ENCODE measurements at regions of chr2 and their contacts with region 1.

Region 1: DNA sequence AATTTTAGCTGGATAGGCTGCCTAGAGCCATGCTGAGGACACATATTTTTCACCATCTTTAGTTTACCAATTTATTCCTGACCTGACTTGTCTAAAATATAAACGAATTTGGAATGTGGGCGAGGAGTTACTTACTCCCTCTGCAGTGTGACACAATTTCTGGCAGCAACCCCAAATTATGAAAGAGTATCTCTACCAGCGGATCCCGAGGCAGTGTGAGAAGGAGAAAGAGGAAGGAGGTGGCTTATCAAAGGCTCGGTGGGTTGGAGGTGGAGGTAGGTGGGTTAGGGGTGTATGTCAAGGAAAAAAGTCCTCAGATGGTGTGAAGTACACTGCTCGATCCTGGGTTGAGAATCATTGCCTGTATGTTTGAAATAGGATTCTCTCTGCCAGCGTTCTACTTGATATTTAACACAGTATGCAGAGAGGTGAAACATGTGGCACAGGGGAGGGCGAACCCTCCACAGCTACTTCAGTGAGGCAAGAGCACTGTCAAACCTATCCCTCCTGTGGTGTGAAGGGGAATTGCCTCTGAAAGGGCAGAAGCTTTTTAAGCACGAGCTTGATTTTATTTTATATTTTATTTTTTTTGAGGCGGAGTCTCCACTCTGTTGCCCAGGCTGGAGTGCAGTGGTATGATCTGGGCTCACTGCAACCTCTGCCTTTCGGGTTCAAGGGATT is 76.0 kb downstream of the RFTN2 start:
- DNase-seq: peak; percentile 87
- H3K4me3 Mint-ChIP-seq: peak overlapping the region; percentile 58
- H3K27ac Mint-ChIP-seq: peak overlapping the region; percentile 75
- H3K4me1 Mint-ChIP-seq: peaks cover 6% of the 10 kb centered on the region
- H3K27me3 Mint-ChIP-seq: no peaks in the 10 kb centered on the region
- CTCF ChIP-seq: peak; percentile 25

Region 2: GRCh38 chr2:197576631-197577030 is 22.8 kb before region 1 on chr2:
- CTCF ChIA-PET with region 1: interaction called, 13 read pairs
- POLR2A ChIA-PET with region 1: interaction called, 23 read pairs
- intact Hi-C with region 1: no loop called
- DNase-seq: peak; percentile 93
- H3K4me3 Mint-ChIP-seq: no peak overlapping the region
- H3K27ac Mint-ChIP-seq: peak overlapping the region; percentile 6
- H3K4me1 Mint-ChIP-seq: peaks cover 12% of the 10 kb centered on the region
- H3K27me3 Mint-ChIP-seq: no peaks in the 10 kb centered on the region
- CTCF ChIP-seq: no peak

Region 3: DNA sequence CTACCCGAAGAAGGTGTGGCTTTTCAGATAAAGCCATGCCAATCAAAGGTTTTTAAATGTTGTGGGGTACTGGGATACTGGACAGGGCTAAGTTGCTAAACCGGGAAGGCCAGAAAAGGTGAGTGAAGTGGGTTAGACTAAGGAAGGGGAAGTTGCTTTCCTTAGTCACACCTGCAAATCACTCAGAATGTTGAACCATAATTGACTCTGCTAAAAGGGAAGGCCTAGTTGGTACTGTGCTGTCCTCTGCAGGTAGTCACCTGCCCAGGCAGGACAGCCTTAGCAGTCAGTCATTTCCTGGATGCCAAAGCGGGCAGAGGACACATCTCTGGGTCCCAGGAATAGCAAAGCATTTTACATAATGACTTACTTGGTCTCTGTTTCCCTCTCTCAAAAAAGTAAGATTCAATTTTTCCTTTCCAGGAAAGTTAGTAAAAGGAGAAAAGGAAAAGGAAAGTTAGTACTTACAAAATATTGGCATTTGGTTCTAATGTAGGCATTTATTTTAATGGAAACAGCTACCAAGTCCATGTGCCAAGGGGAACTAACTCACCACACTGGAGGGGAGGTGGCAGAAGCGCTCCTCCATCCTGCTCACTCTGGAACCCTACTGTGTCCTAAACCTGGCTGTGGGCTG is 15.7 kb after region 1 on chr2:
- CTCF ChIA-PET with region 1: interaction called, 7 read pairs
- POLR2A ChIA-PET with region 1: interaction called, 19 read pairs
- intact Hi-C with region 1: no loop called
- DNase-seq: peak; percentile 60
- H3K4me3 Mint-ChIP-seq: no peak overlapping the region
- H3K27ac Mint-ChIP-seq: peak overlapping the region; percentile 9
- H3K4me1 Mint-ChIP-seq: peaks cover 22% of the 10 kb centered on the region
- H3K27me3 Mint-ChIP-seq: no peaks in the 10 kb centered on the region
- CTCF ChIP-seq: peak; percentile 7

Region 4: GRCh38 chr2:197626965-197627625 is 27.7 kb after region 1 on chr2:
- CTCF ChIA-PET with region 1: no interaction called
- POLR2A ChIA-PET with region 1: no interaction called
- intact Hi-C with region 1: no loop called
- DNase-seq: no peak
- H3K4me3 Mint-ChIP-seq: no peak overlapping the region
- H3K27ac Mint-ChIP-seq: no peak overlapping the region
- H3K4me1 Mint-ChIP-seq: no peaks in the 10 kb centered on the region
- H3K27me3 Mint-ChIP-seq: no peaks in the 10 kb centered on the region
- CTCF ChIP-seq: no peak

Measured in MCF 10A (cell line).